Posterior vena cava (tissue), 2 donors: ENCODE measurements at regions of chr17 and their contacts with region 1.

Region 1: DNA sequence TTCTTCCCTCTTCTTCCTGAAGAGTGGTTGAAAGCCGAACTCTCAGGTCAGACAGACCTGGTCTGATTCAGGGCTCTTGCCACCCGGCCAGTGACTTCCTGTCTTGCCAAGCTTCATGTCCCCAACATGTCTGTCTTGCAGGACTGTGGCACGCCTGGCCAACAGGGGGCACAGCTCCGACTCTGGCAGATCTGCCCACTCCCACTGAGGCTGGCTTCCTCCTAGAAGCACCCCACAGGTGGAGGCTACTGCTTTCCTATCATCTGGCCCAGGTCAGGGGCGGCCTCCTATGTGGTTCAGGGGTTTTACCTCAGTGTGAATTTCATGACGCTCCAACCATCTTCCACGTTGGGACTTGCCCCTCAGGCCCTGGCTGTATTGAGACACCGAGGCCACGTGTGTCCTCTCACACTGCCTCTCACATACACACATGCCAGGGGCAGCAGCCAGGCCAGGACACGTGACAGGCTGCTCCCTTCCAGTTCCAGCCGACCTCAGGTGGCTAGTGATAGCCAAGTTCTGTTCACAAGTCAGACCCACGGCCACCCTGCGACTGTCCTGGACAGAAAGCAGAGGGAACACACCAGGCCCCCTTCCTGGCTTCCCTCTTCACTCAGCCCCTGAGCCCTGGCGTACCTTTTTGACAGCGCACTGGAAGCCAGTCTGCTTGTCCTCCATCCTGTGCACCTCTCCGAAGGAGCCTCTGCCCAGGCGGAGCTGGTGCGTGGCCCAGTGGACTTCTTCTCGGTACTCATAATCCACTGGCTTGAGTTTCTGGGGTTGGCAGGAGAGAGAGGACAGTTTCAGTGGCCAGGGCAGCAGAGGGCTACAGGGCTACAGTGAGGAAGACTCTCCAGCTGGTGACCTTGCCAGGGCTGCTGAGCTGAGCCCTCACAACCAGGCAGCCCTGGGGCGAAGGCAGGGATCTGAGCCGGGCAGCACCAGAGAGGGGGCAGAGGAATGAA is 22.6 kb upstream of the SPATA32 start:
- DNase-seq: no peak

Region 2: DNA sequence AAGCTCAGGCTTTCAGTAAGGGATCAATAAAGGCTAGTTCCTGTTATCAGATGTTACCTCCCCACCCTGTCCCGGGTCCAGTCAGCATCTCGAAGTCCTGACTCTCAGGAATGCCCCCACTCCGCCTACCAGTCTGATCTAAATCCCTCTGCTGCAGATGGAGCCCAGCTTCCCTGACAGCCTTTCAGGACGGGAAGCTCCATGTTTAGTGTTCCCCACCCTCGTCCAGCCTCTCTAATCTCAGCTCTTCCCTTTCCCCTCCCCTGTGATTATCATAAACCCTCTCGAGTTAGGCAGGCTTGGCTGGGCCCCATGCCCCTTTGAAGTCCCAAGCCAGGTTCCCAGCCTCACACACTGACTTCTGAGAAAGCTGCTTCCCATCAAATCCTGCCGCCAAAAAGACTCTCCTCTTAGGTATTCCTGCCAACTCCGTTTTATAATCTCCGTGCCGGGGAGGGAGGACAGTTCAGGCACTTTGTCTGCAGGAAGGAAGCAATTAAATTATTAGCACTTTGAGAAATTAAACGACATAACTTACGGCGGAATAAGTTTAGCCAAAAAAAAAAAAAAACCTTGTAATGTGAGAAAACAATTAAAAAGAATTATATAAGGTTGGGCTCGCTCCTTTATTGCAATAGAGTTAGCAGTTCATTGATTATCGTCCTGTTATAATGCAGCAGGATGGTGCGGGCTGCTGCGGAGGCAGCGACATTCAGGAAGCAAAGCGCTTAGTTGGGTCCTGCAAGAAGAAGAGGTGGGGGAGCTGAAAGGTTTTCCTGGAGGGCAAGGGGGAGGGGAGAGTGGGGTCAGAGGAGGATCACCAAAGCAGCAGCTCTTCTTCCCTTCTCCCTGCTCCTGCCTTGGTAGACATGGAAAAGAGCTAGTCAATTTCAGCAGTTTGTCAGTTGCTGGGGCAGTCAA is 1721.5 kb before region 1 on chr17:
- intact Hi-C with region 1: loop called in 1 of 2 experiments (anchors 5 kb)
- DNase-seq: no peak

Region 3: GRCh38 chr17:45177563-45178169 is 106.8 kb before region 1 on chr17:
- intact Hi-C with region 1: no loop called
- DNase-seq: no peak

Region 4: DNA sequence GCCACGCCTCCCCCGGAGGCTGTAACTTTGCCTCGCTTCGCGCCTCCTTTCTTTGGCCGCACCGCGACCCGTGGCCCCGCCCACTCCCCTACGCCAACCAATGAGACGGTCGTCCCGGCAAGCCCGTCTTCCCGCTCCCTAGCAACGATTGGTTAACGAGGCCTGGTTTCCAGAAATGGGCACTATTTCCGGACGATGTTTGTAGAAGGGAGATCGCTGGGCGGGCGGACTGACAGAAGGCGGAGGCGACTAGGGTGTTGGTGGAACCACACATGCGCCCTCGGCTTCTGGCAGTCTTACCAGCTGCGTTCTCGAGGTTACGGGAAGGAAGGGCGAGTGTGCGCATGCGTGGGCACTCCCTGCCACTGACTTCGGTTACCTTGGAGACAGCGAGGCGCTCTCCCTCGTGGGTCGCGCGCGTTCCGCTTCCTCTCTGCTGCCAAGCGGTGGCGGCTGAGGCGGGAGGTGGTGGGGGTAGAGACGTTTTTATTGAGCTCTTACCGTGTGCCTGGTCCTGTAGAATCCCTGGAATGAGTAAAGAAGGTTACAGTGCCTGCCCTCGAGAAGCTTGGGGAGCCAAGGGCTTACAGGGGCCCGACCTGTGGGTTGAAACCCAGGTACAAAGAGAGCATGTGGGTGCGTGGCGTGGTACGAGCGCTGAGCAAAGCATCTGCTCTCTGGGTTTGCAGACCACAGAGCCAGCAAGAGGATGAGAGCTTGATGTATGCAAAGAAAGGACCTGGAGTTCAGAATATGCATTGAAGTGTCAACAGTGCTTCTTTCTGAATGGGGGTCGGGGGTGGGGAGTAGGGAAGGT is 32.9 kb after region 1 on chr17:
- intact Hi-C with region 1: no loop called
- DNase-seq: peak; percentile 100